Right cardiac atrium (tissue), 5 donors: ENCODE measurements at regions of chr7 and their contacts with region 1.

Region 1: DNA sequence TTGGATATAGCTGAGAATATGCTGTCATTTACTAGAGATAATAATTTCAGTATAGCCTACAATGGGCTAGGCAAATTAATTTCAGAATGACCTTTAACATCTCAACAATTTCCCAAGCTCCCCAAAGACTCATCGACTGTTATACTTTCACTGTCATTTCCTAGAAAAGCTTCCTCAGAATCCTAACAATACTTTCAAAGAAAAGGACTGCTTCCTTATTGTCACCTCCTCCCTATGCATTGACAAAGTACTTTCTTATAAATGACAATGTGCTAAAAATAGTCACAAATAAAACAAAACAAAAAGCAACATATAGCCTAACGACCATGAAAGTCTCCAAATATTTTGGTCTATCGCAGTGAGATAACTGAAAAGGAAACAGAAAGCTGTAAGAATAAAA is 272.6 kb downstream of the ELMO1 start:
- DNase-seq: no peak
- ATAC-seq: no peak
- H3K4me3 ChIP-seq: no peak overlapping the region
- H3K27ac ChIP-seq: no peak overlapping the region
- H3K4me1 ChIP-seq: peaks cover 3% of the 10 kb centered on the region
- H3K27me3 ChIP-seq: no peaks in the 10 kb centered on the region

Region 2: GRCh38 chr7:36986429-36987362 is 189.4 kb before region 1 on chr7:
- intact Hi-C with region 1: loop called in 3 of 4 experiments (anchors 5 kb)
- DNase-seq: peak; percentile 34 to 82 (median 60)
- ATAC-seq: peak; percentile 65 to 72
- H3K4me3 ChIP-seq: no peak overlapping the region
- H3K27ac ChIP-seq: no peak overlapping the region
- H3K4me1 ChIP-seq: peaks cover 3% of the 10 kb centered on the region
- H3K27me3 ChIP-seq: no peaks in the 10 kb centered on the region